Activated naive CD4-positive, alpha-beta T cell treated with anti-CD3 and anti-CD28 coated beads, Interleukin-2, amount 10 ng/mL, durations not matched to agents 7 days and 5 days (primary cell): ENCODE measurements at regions of chr3 and their contacts with region 1.

Region 1: GRCh38 chr3:43162230-43163084 is 56.6 kb upstream of the POMGNT2 start:
- DNase-seq: peak; percentile 78
- H3K4me3 Mint-ChIP-seq: peak overlapping the region; percentile 50
- H3K27ac Mint-ChIP-seq: peak overlapping the region; percentile 95
- H3K4me1 Mint-ChIP-seq: peaks cover 36% of the 10 kb centered on the region
- H3K27me3 Mint-ChIP-seq: peaks cover 8% of the 10 kb centered on the region

Region 2: GRCh38 chr3:43180027-43180426 is 17.6 kb after region 1 on chr3:
- CTCF ChIA-PET with region 1: interaction called, 24 read pairs
- DNase-seq: peak; percentile 62
- H3K4me3 Mint-ChIP-seq: peak overlapping the region; percentile 61
- H3K27ac Mint-ChIP-seq: peak overlapping the region; percentile 95
- H3K4me1 Mint-ChIP-seq: peaks cover 72% of the 10 kb centered on the region
- H3K27me3 Mint-ChIP-seq: peaks cover 7% of the 10 kb centered on the region

Region 3: GRCh38 chr3:43246976-43247375 is 84.5 kb after region 1 on chr3:
- CTCF ChIA-PET with region 1: no interaction called
- DNase-seq: peak; percentile 50
- H3K4me3 Mint-ChIP-seq: no peak overlapping the region
- H3K27ac Mint-ChIP-seq: peak overlapping the region; percentile 35
- H3K4me1 Mint-ChIP-seq: peaks cover 49% of the 10 kb centered on the region
- H3K27me3 Mint-ChIP-seq: peaks cover 4% of the 10 kb centered on the region

Region 4: GRCh38 chr3:43286115-43286840 is 123.8 kb after region 1 on chr3 and contains the start of gene SNRK:
- CTCF ChIA-PET with region 1: interaction called, 13 read pairs
- DNase-seq: peak; percentile 92
- H3K4me3 Mint-ChIP-seq: peak within 1 kb of the TSS; percentile 96
- H3K27ac Mint-ChIP-seq: peak within 1 kb of the TSS; percentile 97
- H3K4me1 Mint-ChIP-seq: peaks cover 37% of the 10 kb centered on the region
- H3K27me3 Mint-ChIP-seq: peaks cover 15% of the 10 kb centered on the region

Region 5: GRCh38 chr3:43378066-43378935 is 215.8 kb after region 1 on chr3:
- CTCF ChIA-PET with region 1: interaction called, 33 read pairs
- DNase-seq: peak; percentile 84
- H3K4me3 Mint-ChIP-seq: no peak overlapping the region
- H3K27ac Mint-ChIP-seq: no peak overlapping the region
- H3K4me1 Mint-ChIP-seq: peaks cover 16% of the 10 kb centered on the region
- H3K27me3 Mint-ChIP-seq: peaks cover 5% of the 10 kb centered on the region

Region 6: DNA sequence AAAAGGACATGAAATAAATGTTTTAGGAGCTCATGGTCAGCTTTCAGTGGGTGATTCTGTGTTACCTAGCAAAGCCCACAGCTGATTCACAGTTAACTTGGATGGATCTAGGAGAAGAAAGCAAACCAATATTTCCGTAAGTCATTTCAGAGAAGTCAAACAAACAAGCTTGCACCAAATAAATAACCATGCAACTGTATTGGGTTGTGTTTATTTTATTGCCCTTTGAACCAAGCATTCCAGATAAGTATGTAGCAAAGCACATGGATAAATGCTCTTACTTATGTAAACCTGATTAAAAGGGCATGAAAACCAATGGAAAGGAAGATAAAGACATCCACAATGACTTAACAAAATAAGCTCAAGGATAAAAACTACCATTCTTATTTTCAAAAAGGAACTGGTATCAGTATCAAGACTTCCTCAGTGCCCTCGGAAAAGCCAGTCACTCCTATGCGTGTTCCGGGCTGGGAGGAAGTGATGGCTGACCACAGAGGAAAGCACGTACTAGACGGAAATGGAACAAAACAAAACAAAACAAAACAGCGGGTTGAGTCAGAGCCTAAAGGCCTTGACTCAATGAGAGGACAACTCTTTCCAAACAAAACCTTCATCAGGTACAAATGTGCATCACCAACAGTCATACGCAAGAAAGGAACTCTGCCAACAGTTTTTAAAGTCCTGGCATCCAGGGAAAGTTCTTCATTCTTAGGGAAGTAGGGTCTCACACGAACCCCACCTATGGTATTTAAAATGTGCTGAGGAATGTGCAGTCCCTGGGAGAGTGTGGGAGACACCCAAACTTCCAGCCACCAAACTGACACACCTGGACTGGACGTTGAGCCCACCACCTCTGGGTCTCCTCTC is 227.2 kb after region 1 on chr3:
- CTCF ChIA-PET with region 1: interaction called, 10 read pairs
- DNase-seq: peak; percentile 83
- H3K4me3 Mint-ChIP-seq: peak overlapping the region; percentile 2
- H3K27ac Mint-ChIP-seq: peak overlapping the region; percentile 96
- H3K4me1 Mint-ChIP-seq: peaks cover 61% of the 10 kb centered on the region
- H3K27me3 Mint-ChIP-seq: peaks cover 20% of the 10 kb centered on the region

Region 7: DNA sequence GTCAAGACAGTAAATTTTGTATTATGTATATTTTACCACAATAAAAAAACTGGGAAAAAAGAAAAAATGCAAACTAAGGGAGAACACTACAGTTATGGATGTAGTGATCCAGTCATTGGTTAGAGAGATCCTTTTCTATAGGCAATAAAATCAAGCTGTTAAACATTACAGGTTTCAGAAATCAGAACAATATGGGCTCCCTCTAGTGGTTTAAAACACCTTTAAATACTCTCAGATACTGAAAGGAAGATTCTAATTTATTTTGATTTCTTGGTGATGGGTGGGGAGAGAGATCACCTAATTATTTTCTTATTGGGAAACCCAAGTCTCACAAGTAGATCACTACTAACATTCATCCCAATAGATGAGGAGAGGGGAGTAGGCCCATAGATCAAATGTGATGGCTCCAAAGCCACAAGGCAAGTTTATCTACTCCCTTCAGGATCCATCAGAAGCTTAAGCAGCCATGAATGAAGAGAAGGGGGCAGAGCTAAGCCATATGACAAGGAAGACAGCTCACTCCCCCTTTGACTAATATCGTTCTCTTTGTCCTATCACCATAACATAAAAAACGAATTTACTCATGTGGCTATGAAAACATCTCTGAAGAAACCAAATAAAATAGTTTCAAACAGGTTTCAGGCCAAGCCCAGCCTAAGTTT is 340.7 kb after region 1 on chr3:
- CTCF ChIA-PET with region 1: interaction called, 59 read pairs
- DNase-seq: no peak
- H3K4me3 Mint-ChIP-seq: no peak overlapping the region
- H3K27ac Mint-ChIP-seq: no peak overlapping the region
- H3K4me1 Mint-ChIP-seq: peaks cover 43% of the 10 kb centered on the region
- H3K27me3 Mint-ChIP-seq: no peaks in the 10 kb centered on the region

Region 8: DNA sequence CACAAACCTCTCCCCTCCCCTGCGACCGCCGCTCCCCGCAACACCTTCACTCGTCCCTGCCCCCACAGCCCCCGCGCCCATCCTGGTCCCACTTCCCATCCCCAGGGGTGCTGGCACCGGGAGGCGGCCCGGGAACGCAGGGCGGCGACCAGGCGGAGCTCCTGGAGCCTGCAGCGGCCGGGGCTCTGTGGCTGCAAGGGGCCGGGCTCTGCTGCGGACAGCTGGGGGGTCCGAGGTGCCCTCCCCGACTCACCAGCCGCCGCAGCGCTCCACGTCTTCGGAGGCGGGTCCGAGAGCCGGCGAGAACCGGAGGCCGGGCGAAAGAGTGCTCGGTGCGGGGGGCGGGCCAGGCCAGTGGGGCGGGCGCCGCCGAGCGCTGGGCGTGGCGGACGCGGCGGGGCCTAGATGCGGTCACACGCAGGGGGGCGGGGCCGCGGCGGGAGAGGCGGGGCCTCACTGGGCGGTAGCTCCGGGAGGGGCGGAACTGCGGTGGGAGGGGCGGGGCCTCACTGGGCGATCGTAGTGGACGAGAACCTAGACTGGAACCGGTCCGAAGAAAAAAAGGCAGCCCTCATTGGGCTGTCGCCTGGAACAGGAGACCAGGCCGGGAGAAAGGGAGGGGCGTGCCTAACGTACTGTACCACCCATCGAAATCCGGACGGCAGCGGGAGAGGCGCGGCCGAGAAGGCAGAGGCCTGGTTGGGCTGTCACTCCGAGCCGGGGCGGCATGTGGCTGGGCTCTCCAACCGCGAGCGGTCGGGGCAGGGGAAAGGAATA is 459.4 kb after region 1 on chr3 and contains the start of gene ANO10:
- CTCF ChIA-PET with region 1: no interaction called
- DNase-seq: peak; percentile 97
- H3K4me3 Mint-ChIP-seq: peak within 1 kb of the TSS; percentile 88
- H3K27ac Mint-ChIP-seq: peak within 1 kb of the TSS; percentile 87
- H3K4me1 Mint-ChIP-seq: peaks cover 35% of the 10 kb centered on the region
- H3K27me3 Mint-ChIP-seq: peaks cover 22% of the 10 kb centered on the region